ENCODE measurements at regions of chr13 and their contacts with region 1.

Region 1: DNA sequence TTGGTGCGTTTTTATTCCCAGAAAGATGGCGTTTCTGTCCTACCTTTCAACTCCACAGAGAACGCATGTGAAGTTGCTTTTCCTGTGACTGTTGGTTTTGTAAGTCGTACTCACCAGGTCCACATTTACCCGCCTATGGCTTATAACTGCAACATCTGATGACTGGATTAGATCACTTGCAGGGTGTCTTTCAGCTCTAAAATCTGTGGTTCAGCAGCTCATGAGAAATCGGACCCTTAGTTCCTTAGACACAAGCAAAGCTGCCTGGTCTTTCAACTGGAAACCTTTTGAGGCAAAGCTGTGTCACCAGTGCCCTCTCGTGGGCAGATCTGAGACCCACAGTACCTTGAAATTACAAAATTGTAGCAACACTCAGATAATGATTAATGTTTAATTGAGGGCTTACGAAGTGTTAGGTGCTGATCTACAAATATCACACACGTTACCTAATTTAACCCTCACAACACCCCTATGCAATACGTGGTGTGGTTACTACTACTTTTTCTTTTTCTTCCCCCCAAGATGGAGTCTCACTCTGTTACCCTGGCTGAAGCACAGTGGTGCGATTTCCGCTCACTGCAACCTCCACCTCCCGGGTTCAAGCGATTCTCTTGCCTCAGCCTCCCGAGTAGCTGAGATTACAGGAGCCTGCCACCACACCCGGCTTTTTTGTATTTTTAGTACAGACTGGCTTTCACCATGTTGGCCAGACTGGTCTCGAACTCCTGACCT is 65.4 kb downstream of the RUBCNL start:
- DNase-seq: peak; percentile 61
- H3K4me3 Mint-ChIP-seq: peak overlapping the region; percentile 81
- H3K27ac Mint-ChIP-seq: peak overlapping the region; percentile 93
- H3K4me1 Mint-ChIP-seq: peaks cover 38% of the 10 kb centered on the region
- H3K27me3 Mint-ChIP-seq: peaks cover 2% of the 10 kb centered on the region

Region 2: DNA sequence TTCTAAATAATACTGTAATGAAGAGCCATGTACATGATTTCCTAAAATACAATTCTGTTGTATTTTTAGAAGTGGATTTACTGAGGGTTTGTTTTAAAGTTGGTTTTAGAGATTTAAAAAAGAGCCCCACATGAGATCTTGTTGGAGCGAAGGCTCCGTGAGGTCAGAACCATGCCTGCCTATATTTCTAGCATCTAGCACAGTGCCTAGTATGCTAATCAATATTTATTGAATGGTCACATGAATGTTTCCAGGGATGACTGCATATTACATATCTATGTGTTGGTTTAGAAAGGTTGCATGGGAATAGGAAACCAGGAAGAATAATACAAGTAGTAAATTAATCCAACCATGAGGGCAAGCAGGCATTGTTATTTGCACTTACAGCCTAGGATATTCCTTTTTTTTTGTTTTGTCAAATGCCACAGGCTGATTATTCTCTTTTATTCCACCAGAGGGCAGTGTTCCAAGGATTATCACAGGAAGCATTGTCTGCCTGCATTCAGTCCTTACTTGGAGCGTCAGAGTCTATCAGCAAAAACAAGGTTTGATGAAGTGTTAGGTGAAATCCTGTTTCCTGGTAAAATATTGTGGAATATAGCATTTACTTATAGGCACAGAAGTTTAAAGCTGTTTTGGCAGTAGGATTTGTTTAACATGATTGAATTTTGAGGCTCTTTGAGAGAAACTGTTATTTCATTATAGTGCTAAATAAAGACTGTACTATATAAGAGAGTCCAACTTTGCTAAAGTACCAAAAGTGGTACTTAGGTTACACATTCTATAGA is 810.2 kb before region 1 on chr13:
- intact Hi-C with region 1: loop called (anchors 5 kb)
- DNase-seq: no peak
- H3K4me3 Mint-ChIP-seq: no peak overlapping the region
- H3K27ac Mint-ChIP-seq: no peak overlapping the region
- H3K4me1 Mint-ChIP-seq: peaks cover 7% of the 10 kb centered on the region
- H3K27me3 Mint-ChIP-seq: no peaks in the 10 kb centered on the region

Region 3: DNA sequence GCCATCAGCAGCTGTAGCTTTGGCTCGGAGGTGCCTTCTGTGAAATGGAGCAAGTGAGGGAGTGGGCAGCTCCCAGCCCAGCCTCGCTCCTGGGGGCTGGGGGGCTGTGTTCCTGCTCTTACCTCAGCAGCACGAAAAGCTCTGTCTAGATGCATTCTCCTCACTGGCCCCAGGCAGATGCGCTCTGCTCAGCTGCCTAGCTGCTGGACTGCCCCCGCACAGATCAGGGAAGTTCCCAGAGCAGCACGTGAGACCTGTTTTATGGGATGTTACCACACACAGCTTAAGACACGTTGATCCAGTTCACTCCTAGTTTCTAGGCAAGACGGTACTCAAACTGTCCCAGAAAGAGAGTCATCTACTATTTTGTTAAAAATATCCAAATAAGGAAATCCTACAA is 153.3 kb before region 1 on chr13:
- intact Hi-C with region 1: loop called (anchors 5 kb)
- DNase-seq: no peak
- H3K4me3 Mint-ChIP-seq: peak overlapping the region; percentile 69
- H3K27ac Mint-ChIP-seq: peak overlapping the region; percentile 94
- H3K4me1 Mint-ChIP-seq: peaks cover 90% of the 10 kb centered on the region
- H3K27me3 Mint-ChIP-seq: no peaks in the 10 kb centered on the region

Region 4: GRCh38 chr13:46295491-46296114 is 26.1 kb before region 1 on chr13:
- intact Hi-C with region 1: loop called (anchors 2 kb)
- DNase-seq: peak; percentile 49
- H3K4me3 Mint-ChIP-seq: peak overlapping the region; percentile 34
- H3K27ac Mint-ChIP-seq: peak overlapping the region; percentile 86
- H3K4me1 Mint-ChIP-seq: peaks cover 45% of the 10 kb centered on the region
- H3K27me3 Mint-ChIP-seq: no peaks in the 10 kb centered on the region

Region 5: DNA sequence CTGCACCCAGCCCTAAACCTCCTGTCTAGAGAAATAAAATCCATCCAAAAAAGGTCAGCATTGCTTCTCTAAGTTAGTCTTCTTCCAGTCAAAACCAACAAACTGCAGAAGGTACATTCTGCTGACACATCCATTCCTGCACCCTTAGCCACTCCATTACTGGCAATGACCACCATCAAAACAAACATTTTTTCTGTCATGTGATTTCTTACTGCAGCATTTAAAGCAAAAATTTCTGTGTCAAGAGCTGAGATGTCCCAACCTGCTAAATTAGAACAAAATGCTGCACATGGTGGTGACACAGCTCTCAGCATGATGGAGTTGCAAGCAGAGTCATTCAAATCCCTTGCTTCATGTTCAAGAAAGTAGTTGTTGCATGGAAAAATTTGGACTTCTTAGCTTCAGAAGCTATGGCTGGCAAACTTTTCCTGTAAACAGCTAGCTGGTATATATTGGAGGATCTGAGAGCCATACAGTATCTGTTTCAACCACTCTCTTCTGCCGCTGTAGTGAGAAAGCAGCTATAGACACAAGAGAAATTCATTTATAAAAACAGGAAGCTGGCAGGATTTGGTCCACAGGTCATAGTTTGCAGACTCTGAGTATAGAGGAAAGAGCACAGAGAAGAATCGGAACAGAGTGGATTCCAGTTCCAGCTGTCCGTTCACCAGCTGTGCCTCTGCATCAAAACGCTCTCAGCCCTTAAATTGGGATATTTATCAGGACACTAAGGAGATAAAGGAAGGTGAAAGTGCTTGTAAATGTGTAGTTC is 48.0 kb after region 1 on chr13:
- intact Hi-C with region 1: no loop called
- DNase-seq: no peak
- H3K4me3 Mint-ChIP-seq: no peak overlapping the region
- H3K27ac Mint-ChIP-seq: no peak overlapping the region
- H3K4me1 Mint-ChIP-seq: peaks cover 24% of the 10 kb centered on the region
- H3K27me3 Mint-ChIP-seq: peaks cover 2% of the 10 kb centered on the region

Region 6: DNA sequence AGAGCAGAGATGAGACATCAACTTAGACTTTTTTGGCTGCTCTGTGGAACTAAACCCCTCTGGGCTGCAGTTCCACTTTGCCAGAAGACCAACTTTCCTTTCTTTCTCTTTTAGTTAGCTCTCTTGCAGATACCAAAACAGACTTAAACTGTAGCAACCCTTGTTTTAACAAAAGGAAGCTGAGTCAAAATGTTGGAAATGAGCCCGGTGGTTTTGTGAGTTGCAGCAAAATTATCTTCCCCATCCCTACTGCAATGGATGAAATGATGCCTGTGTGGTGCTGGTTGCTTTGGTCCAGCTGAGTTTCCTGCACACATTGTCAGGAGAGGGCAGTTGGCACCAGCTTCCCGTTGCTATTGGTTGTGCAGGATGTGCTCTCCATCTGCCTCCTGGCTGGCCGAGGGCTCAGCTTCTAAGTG is 346.7 kb after region 1 on chr13:
- intact Hi-C with region 1: loop called (anchors 10 kb)
- DNase-seq: no peak
- H3K4me3 Mint-ChIP-seq: peak overlapping the region; percentile 68
- H3K27ac Mint-ChIP-seq: peak overlapping the region; percentile 71
- H3K4me1 Mint-ChIP-seq: peaks cover 36% of the 10 kb centered on the region
- H3K27me3 Mint-ChIP-seq: no peaks in the 10 kb centered on the region

Measured in activated T-helper 2 cell treated with anti-CD3 and anti-CD28 coated beads, Interferon-gamma antibody, Interleukin-2, Interleukin-4, amounts not matched to agents 10 μg/mL and 5 μg/mL and 100 μg/mL, durations not matched to agents 14 hours and 24 hours and 36 hours (primary cell).